H1 (cell line): ENCODE measurements at regions of chr10 and their contacts with region 1.

Region 1: GRCh38 chr10:121414366-121415062 is 183.7 kb downstream of the FGFR2 start:
- DNase-seq: no peak
- H3K4me3 ChIP-seq: no peak overlapping the region
- H3K27ac ChIP-seq: no peak overlapping the region
- H3K4me1 ChIP-seq: no peaks in the 10 kb centered on the region
- H3K27me3 ChIP-seq: no peaks in the 10 kb centered on the region
- CTCF ChIP-seq: no peak
- EP300 ChIP-seq: no peak
- POLR2A ChIP-seq: no peak
- RAD21 ChIP-seq: no peak

Region 2: DNA sequence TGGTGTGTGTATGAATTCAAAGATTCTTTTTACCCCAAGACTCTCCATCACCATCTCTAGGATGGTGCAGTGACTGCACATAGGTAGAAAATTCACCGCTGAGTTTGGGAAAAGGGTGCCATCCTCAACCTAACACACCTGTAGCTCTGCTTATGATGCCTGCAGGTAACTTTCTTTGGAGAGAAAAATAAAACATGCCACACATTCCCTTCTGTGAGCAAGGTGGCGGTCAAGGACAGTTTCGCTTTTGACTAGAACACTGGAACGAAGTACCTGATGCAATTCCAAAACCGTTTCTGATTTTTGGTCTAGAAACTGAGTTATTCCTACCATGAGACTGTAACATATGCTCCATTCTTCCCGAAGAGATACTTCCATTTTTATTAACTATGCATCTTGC is 21.9 kb before region 1 on chr10:
- CTCF ChIA-PET with region 1: no interaction called
- POLR2A ChIA-PET with region 1: no interaction called
- DNase-seq: no peak
- H3K4me3 ChIP-seq: no peak overlapping the region
- H3K27ac ChIP-seq: no peak overlapping the region
- H3K4me1 ChIP-seq: no peaks in the 10 kb centered on the region; a peak in 1 of 7 replicates
- H3K27me3 ChIP-seq: no peaks in the 10 kb centered on the region
- CTCF ChIP-seq: no peak
- EP300 ChIP-seq: no peak
- POLR2A ChIP-seq: no peak
- RAD21 ChIP-seq: 0 out of 4 replicates have a peak, but pooled peaks of 1 of the 2 experiments have one; percentile 9

Region 3: GRCh38 chr10:121426307-121426706 is 11.8 kb after region 1 on chr10:
- CTCF ChIA-PET with region 1: interaction called, 10 read pairs
- POLR2A ChIA-PET with region 1: no interaction called
- DNase-seq: peak in 1 of 2 experiments; percentile 46
- H3K4me3 ChIP-seq: no peak overlapping the region
- H3K27ac ChIP-seq: no peak overlapping the region
- H3K4me1 ChIP-seq: peaks cover 0 to 2% (median 0%) of the 10 kb centered on the region in 4 experiments; a peak in 1 of 7 replicates
- H3K27me3 ChIP-seq: peaks cover 0 to 2% (median 0%) of the 10 kb centered on the region in 4 experiments; a peak in 2 of 7 replicates
- CTCF ChIP-seq: no peak
- EP300 ChIP-seq: no peak
- POLR2A ChIP-seq: no peak
- RAD21 ChIP-seq: no peak